GM12878 (cell line): ENCODE measurements at regions of chr12 and their contacts with region 1.

Region 1: GRCh38 chr12:14845350-14845750 is 2.0 kb upstream of the ART4 start:
- DNase-seq: no peak
- ATAC-seq: peak; percentile 82
- H3K4me3 ChIP-seq: no peak overlapping the region
- H3K27ac ChIP-seq: no peak overlapping the region
- H3K4me1 ChIP-seq: no peaks in the 10 kb centered on the region
- H3K27me3 ChIP-seq: no peaks in the 10 kb centered on the region; a peak in 1 of 4 replicates
- CTCF ChIP-seq: peak; percentile 61 to 78 (median 62); a peak in 5 of 6 replicates
- EP300 ChIP-seq: no peak
- POLR2A ChIP-seq: no peak
- RAD21 ChIP-seq: peak; percentile 99

Region 2: DNA sequence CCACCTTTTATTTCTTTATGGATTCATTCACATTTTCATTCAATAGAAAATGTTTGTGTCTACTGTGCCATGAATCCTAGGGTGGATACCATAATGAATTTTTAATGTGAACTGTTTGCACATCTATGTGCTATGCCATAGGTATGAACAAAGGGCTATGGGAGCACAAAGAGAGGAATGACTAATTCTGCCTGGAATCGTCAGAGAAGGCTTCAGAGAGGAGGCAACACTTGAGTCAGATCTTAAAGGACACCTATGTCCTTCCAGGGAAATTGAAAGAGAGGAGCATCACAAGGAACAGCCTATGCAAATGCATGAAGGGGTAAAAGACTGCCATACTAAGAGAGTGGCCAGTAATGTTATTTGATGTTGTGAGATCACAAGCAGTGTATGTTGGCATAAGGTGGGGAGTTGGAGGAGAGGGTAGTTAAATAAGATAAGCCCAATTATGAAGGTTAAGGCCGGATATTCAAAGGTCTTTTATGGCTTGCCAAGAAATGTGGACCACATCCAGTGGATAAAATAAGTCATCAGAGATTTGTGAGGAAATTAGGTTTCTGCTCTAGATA is 1110.7 kb before region 1 on chr12:
- CTCF ChIA-PET with region 1: no interaction called
- POLR2A ChIA-PET with region 1: no interaction called
- RAD21 ChIA-PET with region 1: no interaction called
- SMC1A ChIA-PET with region 1: no interaction called
- in situ Hi-C with region 1: no loop called
- intact Hi-C with region 1: no loop called
- DNase-seq: no peak
- ATAC-seq: no peak
- H3K4me3 ChIP-seq: no peak overlapping the region
- H3K27ac ChIP-seq: no peak overlapping the region
- H3K4me1 ChIP-seq: no peaks in the 10 kb centered on the region
- H3K27me3 ChIP-seq: no peaks in the 10 kb centered on the region
- CTCF ChIP-seq: no peak
- EP300 ChIP-seq: no peak
- POLR2A ChIP-seq: no peak
- RAD21 ChIP-seq: no peak

Region 3: GRCh38 chr12:14408208-14408607 is 437.1 kb before region 1 on chr12:
- CTCF ChIA-PET with region 1: no interaction called
- POLR2A ChIA-PET with region 1: no interaction called
- RAD21 ChIA-PET with region 1: no interaction called
- SMC1A ChIA-PET with region 1: no interaction called
- in situ Hi-C with region 1: no loop called
- intact Hi-C with region 1: no loop called
- DNase-seq: no peak
- ATAC-seq: no peak
- H3K4me3 ChIP-seq: no peak overlapping the region
- H3K27ac ChIP-seq: no peak overlapping the region
- H3K4me1 ChIP-seq: peaks cover 1% of the 10 kb centered on the region; the same call in 1 of the 2 replicates
- H3K27me3 ChIP-seq: no peaks in the 10 kb centered on the region
- CTCF ChIP-seq: no peak
- EP300 ChIP-seq: no peak
- POLR2A ChIP-seq: no peak
- RAD21 ChIP-seq: no peak

Region 4: DNA sequence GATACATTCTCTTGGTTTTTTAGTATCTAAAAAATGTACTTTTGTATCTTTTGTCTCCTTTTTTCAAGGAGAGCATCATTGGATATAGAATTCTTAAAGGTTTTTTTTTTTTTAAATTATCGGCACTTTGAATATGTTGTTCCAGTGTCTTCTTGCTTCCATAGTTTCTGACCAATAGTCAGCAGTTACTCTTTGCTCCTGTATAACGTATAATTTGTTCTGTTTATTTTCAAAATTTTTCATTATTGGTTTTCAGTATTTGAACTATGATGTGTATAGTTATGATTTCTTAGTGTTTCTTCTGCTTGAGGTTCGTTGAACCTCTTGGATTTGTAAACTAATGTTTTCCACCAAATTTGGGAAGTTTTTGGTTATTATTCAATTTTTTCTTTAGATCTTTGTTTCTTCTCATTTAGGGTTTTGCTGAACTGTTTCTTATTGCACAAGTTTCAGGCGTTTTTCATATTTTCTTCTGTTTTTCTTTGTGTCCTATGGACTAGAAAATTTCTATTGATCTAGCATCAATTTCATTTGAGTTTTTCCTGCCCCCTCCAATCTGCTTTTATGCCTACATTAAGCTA is 371.6 kb before region 1 on chr12:
- CTCF ChIA-PET with region 1: no interaction called
- POLR2A ChIA-PET with region 1: no interaction called
- RAD21 ChIA-PET with region 1: no interaction called
- SMC1A ChIA-PET with region 1: no interaction called
- in situ Hi-C with region 1: no loop called
- intact Hi-C with region 1: no loop called
- DNase-seq: no peak
- ATAC-seq: no peak
- H3K4me3 ChIP-seq: no peak overlapping the region
- H3K27ac ChIP-seq: no peak overlapping the region
- H3K4me1 ChIP-seq: no peaks in the 10 kb centered on the region
- H3K27me3 ChIP-seq: no peaks in the 10 kb centered on the region
- CTCF ChIP-seq: no peak
- EP300 ChIP-seq: no peak
- POLR2A ChIP-seq: no peak
- RAD21 ChIP-seq: no peak

Region 5: GRCh38 chr12:14723763-14724162 is 121.6 kb before region 1 on chr12:
- CTCF ChIA-PET with region 1: interaction called, 6 read pairs
- POLR2A ChIA-PET with region 1: no interaction called
- RAD21 ChIA-PET with region 1: interaction called, 3 read pairs
- SMC1A ChIA-PET with region 1: interaction called, 7 read pairs
- in situ Hi-C with region 1: no loop called
- intact Hi-C with region 1: loop called (anchors 2 kb)
- DNase-seq: peak; percentile 37
- ATAC-seq: peak; percentile 88
- H3K4me3 ChIP-seq: no peak overlapping the region
- H3K27ac ChIP-seq: no peak overlapping the region
- H3K4me1 ChIP-seq: no peaks in the 10 kb centered on the region
- H3K27me3 ChIP-seq: no peaks in the 10 kb centered on the region
- CTCF ChIP-seq: peak; percentile 72 to 79 (median 74)
- EP300 ChIP-seq: no peak
- POLR2A ChIP-seq: no peak
- RAD21 ChIP-seq: peak; percentile 79

Region 6: DNA sequence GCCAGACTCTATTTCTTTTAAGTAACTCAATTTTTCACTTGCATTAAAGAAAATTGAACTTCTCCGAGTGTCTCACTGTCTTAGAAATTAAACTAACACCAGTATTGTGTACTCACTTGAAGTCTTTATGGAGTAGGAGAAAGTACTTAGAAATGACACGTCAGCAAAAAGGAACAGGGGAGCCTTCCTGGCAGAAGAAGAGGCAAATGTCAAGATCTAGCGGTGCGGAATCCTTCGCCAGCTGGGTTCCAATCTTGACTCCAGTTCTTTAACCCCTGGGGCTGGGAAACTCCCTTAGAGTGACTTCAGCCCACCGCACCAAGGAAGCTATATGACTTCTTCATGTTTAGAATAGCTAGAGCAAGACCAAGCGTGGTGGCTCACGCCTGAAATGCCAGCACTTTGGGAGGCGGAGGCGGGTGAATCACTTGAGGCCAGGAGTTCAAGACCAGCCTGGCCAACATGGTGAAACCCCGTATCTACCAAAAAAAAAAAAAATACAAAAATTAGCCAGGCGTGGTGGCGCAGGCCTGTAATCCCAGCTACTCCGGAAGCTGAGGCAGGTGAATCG is 76.4 kb before region 1 on chr12:
- CTCF ChIA-PET with region 1: no interaction called
- POLR2A ChIA-PET with region 1: no interaction called
- RAD21 ChIA-PET with region 1: no interaction called
- SMC1A ChIA-PET with region 1: no interaction called
- in situ Hi-C with region 1: no loop called
- intact Hi-C with region 1: no loop called
- DNase-seq: peak; percentile 30
- ATAC-seq: peak; percentile 35
- H3K4me3 ChIP-seq: peak overlapping the region; percentile 83
- H3K27ac ChIP-seq: peak overlapping the region; percentile 99
- H3K4me1 ChIP-seq: no peaks in the 10 kb centered on the region; the same call in 1 of the 2 replicates
- H3K27me3 ChIP-seq: no peaks in the 10 kb centered on the region
- CTCF ChIP-seq: no peak
- EP300 ChIP-seq: no peak
- POLR2A ChIP-seq: no peak
- RAD21 ChIP-seq: no peak

Region 7: DNA sequence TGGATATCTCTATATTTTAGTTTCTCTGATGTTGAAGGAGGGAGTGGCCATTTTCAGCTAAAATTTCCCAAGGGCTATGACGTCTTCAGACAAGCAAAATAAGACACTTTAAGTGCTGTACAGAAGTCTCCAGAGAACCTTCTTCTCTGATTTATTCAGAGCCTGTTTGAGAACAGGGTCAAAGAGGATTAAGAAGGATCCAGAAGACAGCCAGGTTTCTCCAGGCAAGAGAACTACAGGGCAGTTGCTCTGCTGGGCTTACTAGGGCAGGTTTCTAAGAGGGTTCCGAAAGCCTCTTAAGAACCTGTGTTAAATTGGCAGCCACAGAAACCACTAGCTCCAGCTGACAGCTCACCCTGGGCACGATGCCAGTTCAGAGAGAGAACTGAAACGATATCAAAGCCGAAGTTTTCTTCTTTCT is 39.1 kb after region 1 on chr12:
- CTCF ChIA-PET with region 1: interaction called, 82 read pairs
- POLR2A ChIA-PET with region 1: no interaction called
- RAD21 ChIA-PET with region 1: no interaction called
- SMC1A ChIA-PET with region 1: interaction called, 10 read pairs
- in situ Hi-C with region 1: no loop called
- intact Hi-C with region 1: loop called (anchors 5 kb)
- DNase-seq: peak; percentile 70
- ATAC-seq: peak; percentile 99
- H3K4me3 ChIP-seq: no peak overlapping the region
- H3K27ac ChIP-seq: no peak overlapping the region
- H3K4me1 ChIP-seq: peaks cover 9% of the 10 kb centered on the region; the same call in 1 of the 2 replicates
- H3K27me3 ChIP-seq: no peaks in the 10 kb centered on the region; a peak in 3 of 4 replicates
- CTCF ChIP-seq: no peak
- EP300 ChIP-seq: peak in 1 of 2 experiments; percentile 36; a peak in 1 of 4 replicates
- POLR2A ChIP-seq: no peak
- RAD21 ChIP-seq: no peak

Region 8: GRCh38 chr12:14892726-14893505 is 47.6 kb after region 1 on chr12:
- CTCF ChIA-PET with region 1: interaction called, 82 read pairs
- POLR2A ChIA-PET with region 1: no interaction called
- RAD21 ChIA-PET with region 1: interaction called, 6 read pairs
- SMC1A ChIA-PET with region 1: interaction called, 22 read pairs
- in situ Hi-C with region 1: no loop called
- intact Hi-C with region 1: no loop called
- DNase-seq: no peak
- ATAC-seq: peak; percentile 74
- H3K4me3 ChIP-seq: no peak overlapping the region
- H3K27ac ChIP-seq: no peak overlapping the region
- H3K4me1 ChIP-seq: no peaks in the 10 kb centered on the region
- H3K27me3 ChIP-seq: no peaks in the 10 kb centered on the region; a peak in 1 of 4 replicates
- CTCF ChIP-seq: peak in 2 of 3 experiments; percentile 19 to 44; a peak in 3 of 6 replicates
- EP300 ChIP-seq: no peak
- POLR2A ChIP-seq: no peak
- RAD21 ChIP-seq: no peak; the same call in 1 of the 2 replicates

Region 9: DNA sequence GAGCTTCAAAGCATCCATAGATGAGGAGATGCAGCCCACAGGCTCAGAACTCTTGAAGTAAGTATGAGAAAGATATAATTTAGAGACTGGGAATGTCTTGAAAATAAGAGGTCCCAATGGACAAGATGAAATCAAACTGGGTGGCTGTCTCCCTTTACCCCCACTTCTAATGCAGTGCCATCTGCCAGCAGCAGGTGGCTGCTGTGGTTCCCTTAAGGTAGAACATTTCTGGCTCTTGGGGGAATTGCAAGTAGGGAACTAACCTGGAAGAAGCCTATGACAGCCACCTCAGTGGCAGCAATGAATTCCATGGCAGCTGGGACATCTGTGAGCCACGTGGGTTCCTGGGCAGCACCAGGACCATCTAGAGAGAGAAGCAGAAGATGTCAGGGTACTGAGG is 92.3 kb after region 1 on chr12:
- CTCF ChIA-PET with region 1: interaction called, 4 read pairs
- POLR2A ChIA-PET with region 1: no interaction called
- RAD21 ChIA-PET with region 1: interaction called, 3 read pairs
- SMC1A ChIA-PET with region 1: interaction called, 4 read pairs
- in situ Hi-C with region 1: no loop called
- intact Hi-C with region 1: loop called (anchors 5 kb)
- DNase-seq: no peak
- ATAC-seq: peak; percentile 74
- H3K4me3 ChIP-seq: no peak overlapping the region
- H3K27ac ChIP-seq: no peak overlapping the region
- H3K4me1 ChIP-seq: no peaks in the 10 kb centered on the region; the same call in 1 of the 2 replicates
- H3K27me3 ChIP-seq: no peaks in the 10 kb centered on the region
- CTCF ChIP-seq: peak; percentile 34 to 43 (median 37); a peak in 5 of 6 replicates
- EP300 ChIP-seq: no peak
- POLR2A ChIP-seq: no peak
- RAD21 ChIP-seq: peak; percentile 52

Region 10: DNA sequence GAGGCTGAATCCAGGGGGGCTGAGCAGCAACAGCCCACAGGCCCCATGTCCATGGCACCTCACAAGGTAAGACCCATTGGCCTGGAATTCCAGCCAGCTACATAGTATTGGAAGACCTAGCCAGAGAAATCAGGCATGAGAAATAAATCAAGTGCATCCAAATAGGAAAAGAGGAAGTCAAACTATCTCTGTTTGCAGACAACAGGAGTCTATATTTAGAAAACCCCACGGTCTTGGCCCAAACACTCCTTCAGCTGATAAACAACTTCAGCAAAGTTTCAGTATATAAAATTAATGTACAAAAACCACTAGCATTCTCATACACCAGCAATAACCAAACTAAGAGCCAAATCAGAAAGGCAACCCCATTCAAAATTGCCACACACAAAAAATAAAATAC is 144.4 kb after region 1 on chr12:
- CTCF ChIA-PET with region 1: interaction called, 104 read pairs
- POLR2A ChIA-PET with region 1: no interaction called
- RAD21 ChIA-PET with region 1: interaction called, 70 read pairs
- SMC1A ChIA-PET with region 1: interaction called, 242 read pairs
- in situ Hi-C with region 1: no loop called
- intact Hi-C with region 1: no loop called
- DNase-seq: no peak
- ATAC-seq: peak; percentile 49
- H3K4me3 ChIP-seq: no peak overlapping the region
- H3K27ac ChIP-seq: peak overlapping the region; percentile 27
- H3K4me1 ChIP-seq: peaks cover 17% of the 10 kb centered on the region
- H3K27me3 ChIP-seq: no peaks in the 10 kb centered on the region
- CTCF ChIP-seq: no peak
- EP300 ChIP-seq: 0 out of 4 replicates have a peak, but pooled peaks of 1 of the 2 experiments have one; percentile 14
- POLR2A ChIP-seq: no peak
- RAD21 ChIP-seq: no peak

Region 11: GRCh38 chr12:15268927-15269552 is 423.7 kb after region 1 on chr12:
- CTCF ChIA-PET with region 1: no interaction called
- POLR2A ChIA-PET with region 1: no interaction called
- RAD21 ChIA-PET with region 1: no interaction called
- SMC1A ChIA-PET with region 1: no interaction called
- in situ Hi-C with region 1: no loop called
- intact Hi-C with region 1: loop called (anchors 5 kb)
- DNase-seq: no peak
- ATAC-seq: peak; percentile 86
- H3K4me3 ChIP-seq: no peak overlapping the region
- H3K27ac ChIP-seq: no peak overlapping the region
- H3K4me1 ChIP-seq: no peaks in the 10 kb centered on the region
- H3K27me3 ChIP-seq: no peaks in the 10 kb centered on the region
- CTCF ChIP-seq: peak; percentile 80 to 86 (median 84)
- EP300 ChIP-seq: no peak
- POLR2A ChIP-seq: no peak
- RAD21 ChIP-seq: peak; percentile 89